Vagina (tissue), 2 donors: ENCODE measurements at regions of chr15 and their contacts with region 1.

Region 1: GRCh38 chr15:65318870-65319356 is 14.4 kb downstream of the RNU5B-1 start:
- DNase-seq: no peak
- H3K4me3 ChIP-seq: no peak overlapping the region
- H3K27ac ChIP-seq: no peak overlapping the region
- H3K4me1 ChIP-seq: no peaks in the 10 kb centered on the region
- H3K27me3 ChIP-seq: no peaks in the 10 kb centered on the region
- CTCF ChIP-seq: peak; percentile 76 to 95 (median 93)
- POLR2A ChIP-seq: no peak

Region 2: DNA sequence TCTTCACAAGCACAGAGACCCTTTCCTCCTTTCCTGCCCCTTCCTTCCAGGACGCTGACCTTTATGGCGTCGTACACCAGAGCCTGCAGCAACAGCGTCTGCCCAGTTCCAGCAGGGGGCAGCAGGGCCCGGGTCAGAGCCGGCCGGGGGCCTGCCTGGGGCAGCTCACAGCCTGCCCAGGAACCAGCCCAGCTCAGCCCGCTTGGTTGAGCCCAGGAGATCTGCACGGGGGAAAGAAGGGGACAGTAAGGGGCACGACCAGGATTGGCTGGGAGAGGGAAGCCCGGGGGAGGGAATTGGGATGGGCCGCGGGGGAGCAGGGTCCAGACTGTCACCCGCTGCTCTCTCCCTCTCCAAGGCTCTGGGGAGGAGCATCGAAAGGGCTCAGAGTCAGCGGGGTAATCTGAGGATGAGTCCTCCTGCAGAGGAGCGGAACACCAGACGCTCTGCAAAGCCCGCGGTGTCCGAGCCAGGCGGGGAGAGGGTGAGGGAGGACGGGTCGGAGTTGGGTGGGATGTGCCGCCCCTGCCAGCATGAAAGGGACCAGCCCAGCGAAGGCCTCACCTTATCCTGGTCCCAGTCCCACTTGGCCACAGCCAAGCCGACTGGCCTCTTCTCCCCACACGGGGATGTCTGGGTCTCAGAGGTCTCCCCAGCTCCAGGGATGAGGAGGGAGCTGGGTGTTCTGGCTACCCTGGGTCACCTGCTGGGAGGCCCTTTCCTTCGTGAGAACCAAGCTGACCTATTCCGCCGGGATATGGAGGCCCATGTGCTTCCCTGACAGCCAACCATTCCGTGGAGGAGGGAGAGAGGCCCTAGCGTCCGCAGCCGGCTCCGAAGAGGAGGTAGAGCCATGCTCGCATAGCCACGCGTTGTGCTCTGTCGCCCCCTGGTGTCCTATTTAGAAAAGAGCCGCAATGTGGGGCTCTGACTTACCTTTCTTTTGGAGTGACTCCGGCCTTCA is 66.3 kb after region 1 on chr15:
- intact Hi-C with region 1: loop called (anchors 5 kb)
- DNase-seq: no peak
- H3K4me3 ChIP-seq: peak overlapping the region; percentile 30 to 31
- H3K27ac ChIP-seq: peak overlapping the region; percentile 78
- H3K4me1 ChIP-seq: peaks cover 24% of the 10 kb centered on the region
- H3K27me3 ChIP-seq: no peaks in the 10 kb centered on the region
- CTCF ChIP-seq: peak; percentile 82 to 86 (median 84)
- POLR2A ChIP-seq: no peak

Region 3: GRCh38 chr15:65530314-65531122 is 211.6 kb after region 1 on chr15 and contains the start of gene HACD3:
- intact Hi-C with region 1: no loop called
- DNase-seq: no peak
- H3K4me3 ChIP-seq: peak within 1 kb of the TSS; percentile 66 to 98
- H3K27ac ChIP-seq: peak within 1 kb of the TSS; percentile 65
- H3K4me1 ChIP-seq: peaks cover 42% of the 10 kb centered on the region
- H3K27me3 ChIP-seq: no peaks in the 10 kb centered on the region
- CTCF ChIP-seq: no peak
- POLR2A ChIP-seq: no peak
- total RNA-seq, gene HACD3: 30.2 TPM